Activated CD8-positive, alpha-beta memory T cell treated with anti-CD3 and anti-CD28 coated beads, Interleukin-2, amount 10 ng/mL, durations not matched to agents 7 days and 5 days (primary cell): ENCODE measurements at regions of chr2 and their contacts with region 1.

Region 1: GRCh38 chr2:234483568-234484251 is 13.2 kb downstream of the ARL4C start:
- DNase-seq: peak; percentile 96
- ATAC-seq: peak; percentile 84
- H3K4me3 Mint-ChIP-seq: peak overlapping the region; percentile 35
- H3K27ac Mint-ChIP-seq: peak overlapping the region; percentile 86
- H3K4me1 Mint-ChIP-seq: peaks cover 96% of the 10 kb centered on the region
- H3K27me3 Mint-ChIP-seq: no peaks in the 10 kb centered on the region

Region 2: DNA sequence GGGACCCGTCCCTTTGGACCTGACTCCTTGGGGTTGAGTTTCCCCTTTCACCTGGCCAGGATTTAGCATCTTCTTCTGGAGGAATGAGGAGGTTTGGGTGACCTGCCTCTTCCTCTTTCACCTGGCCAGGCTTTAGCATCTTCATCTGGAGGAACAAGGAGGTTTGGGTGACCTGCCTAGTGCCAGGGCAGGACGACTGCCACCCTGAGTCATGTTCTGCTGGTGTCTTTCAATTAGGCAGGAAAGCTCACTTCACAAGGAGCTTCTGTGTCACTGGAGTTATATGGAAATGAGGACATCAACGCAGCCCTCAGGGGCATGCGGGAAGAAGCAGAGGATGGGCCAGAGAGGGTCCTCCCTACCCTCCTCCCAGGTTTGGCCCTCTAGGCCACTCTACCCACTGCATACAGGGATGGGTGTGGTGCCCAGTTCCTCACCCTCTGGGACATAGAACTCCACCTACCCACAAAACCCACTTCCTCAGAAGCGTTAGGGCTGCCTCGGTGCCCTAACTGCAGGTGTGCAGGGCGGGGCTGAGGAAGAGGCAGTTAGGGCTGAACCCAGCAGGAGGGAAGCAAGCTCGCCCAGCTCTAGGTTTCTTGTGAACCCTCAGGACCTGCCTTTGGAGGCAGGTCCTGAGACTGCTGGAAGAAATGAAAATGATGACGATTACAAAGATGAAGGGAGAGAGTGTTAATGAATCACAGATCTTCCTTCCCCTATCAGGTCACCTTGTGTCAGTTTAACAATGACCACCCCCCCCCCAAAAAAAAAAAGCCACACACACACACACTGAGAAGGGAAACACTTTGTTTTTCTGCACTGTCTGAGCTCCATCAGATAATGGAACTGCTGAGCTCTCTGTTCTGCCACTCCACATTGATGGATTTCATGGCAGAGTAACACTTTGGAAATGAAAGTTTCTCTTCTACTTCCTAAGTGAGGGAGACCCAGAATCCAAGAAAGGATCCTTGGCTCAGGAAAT is 57.8 kb before region 1 on chr2:
- CTCF ChIA-PET with region 1: interaction called, 13 read pairs
- DNase-seq: peak; percentile 92
- ATAC-seq: peak; percentile 82
- H3K4me3 Mint-ChIP-seq: peak overlapping the region; percentile 41
- H3K27ac Mint-ChIP-seq: peak overlapping the region; percentile 97
- H3K4me1 Mint-ChIP-seq: peaks cover 80% of the 10 kb centered on the region
- H3K27me3 Mint-ChIP-seq: no peaks in the 10 kb centered on the region

Region 3: GRCh38 chr2:234446404-234447076 is 37.2 kb before region 1 on chr2:
- CTCF ChIA-PET with region 1: interaction called, 12 read pairs
- DNase-seq: peak; percentile 96
- ATAC-seq: peak; percentile 95
- H3K4me3 Mint-ChIP-seq: peak overlapping the region; percentile 44
- H3K27ac Mint-ChIP-seq: peak overlapping the region; percentile 97
- H3K4me1 Mint-ChIP-seq: peaks cover 84% of the 10 kb centered on the region
- H3K27me3 Mint-ChIP-seq: no peaks in the 10 kb centered on the region

Region 4: DNA sequence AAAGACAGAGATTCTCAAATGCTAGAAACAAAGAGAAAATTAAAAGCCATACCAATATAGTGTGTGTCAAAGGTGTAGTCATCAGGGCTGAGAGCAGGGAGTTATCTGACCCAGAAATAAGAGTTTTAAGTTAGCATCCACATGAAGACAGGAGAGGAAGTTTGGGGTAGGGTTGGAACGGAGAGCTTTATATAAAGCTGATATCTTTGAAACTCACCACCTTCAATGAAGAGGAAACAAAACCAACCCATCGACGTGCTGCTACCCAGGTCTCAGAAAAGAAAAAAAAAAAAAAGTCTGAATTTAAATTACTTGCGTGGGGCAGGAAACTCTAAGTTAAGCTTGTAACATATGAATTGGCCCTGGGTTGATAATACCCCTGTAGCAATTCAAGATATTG is 29.3 kb before region 1 on chr2:
- CTCF ChIA-PET with region 1: interaction called, 13 read pairs
- DNase-seq: no peak
- ATAC-seq: peak; percentile 67
- H3K4me3 Mint-ChIP-seq: peak overlapping the region; percentile 78
- H3K27ac Mint-ChIP-seq: peak overlapping the region; percentile 86
- H3K4me1 Mint-ChIP-seq: peaks cover 79% of the 10 kb centered on the region
- H3K27me3 Mint-ChIP-seq: no peaks in the 10 kb centered on the region

Region 5: DNA sequence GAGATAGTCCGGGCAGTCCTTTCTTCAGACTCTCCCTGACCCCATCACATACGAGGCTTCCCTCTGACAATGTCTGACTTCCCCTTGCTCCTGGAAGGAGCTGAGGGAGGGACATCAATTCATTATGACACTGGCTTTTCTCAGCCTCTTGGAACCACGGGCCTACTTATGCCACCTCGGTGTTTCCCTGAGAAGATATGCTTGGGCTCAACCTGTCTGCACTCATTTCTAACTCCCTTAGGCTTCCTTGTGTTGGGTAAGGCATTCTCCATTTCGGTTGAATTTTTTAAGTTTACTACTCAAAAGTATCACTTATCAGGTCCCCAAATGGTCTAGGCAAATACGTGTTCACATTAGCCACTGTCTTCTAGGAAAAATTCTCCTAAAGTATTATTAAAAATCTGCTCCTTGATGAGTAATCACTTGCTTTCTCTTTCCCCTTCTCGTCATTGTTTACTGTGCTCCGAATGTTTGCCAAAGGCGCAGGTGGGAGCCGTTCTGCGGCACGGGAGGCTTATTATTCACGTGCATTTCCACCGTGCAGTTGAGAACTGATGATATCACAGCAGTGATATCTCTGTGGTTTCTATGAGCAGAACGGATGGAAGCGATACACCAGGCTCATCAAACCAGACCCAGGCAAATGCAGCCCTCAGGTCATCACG is 20.0 kb before region 1 on chr2:
- CTCF ChIA-PET with region 1: interaction called, 13 read pairs
- DNase-seq: peak; percentile 80
- ATAC-seq: peak; percentile 75
- H3K4me3 Mint-ChIP-seq: peak overlapping the region; percentile 70
- H3K27ac Mint-ChIP-seq: peak overlapping the region; percentile 85
- H3K4me1 Mint-ChIP-seq: peaks cover 53% of the 10 kb centered on the region
- H3K27me3 Mint-ChIP-seq: no peaks in the 10 kb centered on the region

Region 6: DNA sequence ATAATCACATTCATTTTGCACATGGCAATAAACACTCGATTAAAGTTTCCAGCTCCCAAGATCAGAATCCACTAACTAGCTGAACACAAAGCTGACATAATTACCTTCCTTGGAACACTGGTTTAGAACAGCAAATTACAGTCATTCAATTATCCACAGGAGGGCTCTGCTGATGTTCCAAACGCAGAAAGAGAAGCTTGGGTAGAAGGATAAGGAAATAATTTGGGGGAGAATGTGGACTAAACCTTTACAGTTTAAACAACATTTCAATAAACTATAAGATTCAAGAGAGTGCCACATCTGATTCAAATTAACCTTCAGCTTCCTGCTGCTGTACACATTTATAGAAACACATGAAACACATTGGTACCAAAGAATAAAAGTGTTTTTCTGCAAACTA is 81.0 kb after region 1 on chr2:
- CTCF ChIA-PET with region 1: no interaction called
- DNase-seq: no peak
- ATAC-seq: no peak
- H3K4me3 Mint-ChIP-seq: no peak overlapping the region
- H3K27ac Mint-ChIP-seq: no peak overlapping the region
- H3K4me1 Mint-ChIP-seq: no peaks in the 10 kb centered on the region
- H3K27me3 Mint-ChIP-seq: peaks cover 19% of the 10 kb centered on the region